Activated CD4-positive, alpha-beta T cell treated with anti-CD3 and anti-CD28 coated beads, Interleukin-2, amount 10 ng/mL, durations not matched to agents 7 days and 5 days (primary cell): ENCODE measurements at regions of chr17 and their contacts with region 1.

Region 1: DNA sequence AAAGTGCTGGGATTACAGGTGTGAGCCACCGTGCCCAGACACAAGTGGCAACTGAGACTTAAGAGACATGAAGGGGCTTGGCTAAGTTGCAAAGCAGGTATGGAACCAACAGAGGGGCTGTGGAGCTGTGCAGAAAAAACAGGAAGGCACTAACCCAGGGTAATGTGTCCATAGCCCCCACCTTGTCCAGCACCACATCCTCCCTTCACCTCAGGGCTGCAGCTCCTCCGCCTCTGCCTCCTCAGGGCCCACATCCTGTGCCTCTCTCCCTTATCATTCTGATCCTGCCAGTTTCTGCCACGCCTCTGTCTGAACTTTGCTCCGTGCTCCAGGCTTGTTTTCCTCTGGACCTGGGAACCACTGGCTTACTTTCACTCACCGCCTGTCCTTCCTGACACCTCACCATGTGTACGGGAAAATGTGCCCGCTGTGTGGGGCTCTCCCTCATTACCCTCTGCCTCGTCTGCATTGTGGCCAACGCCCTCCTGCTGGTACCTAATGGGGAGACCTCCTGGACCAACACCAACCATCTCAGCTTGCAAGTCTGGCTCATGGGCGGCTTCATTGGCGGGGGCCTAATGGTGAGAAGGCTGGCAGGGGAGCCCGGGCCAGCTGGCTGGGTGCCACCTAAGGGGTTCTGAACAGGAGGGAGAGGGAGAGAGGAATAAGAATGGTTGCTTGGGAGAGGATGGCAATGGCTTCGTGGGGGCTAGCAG is at the start of gene TM4SF5:
- DNase-seq: peak; percentile 56
- H3K4me3 Mint-ChIP-seq: no peak within 1 kb of the TSS
- H3K27ac Mint-ChIP-seq: peak within 1 kb of the TSS; percentile 78
- H3K4me1 Mint-ChIP-seq: peaks cover 18% of the 10 kb centered on the region
- H3K27me3 Mint-ChIP-seq: peaks cover 4% of the 10 kb centered on the region
- total RNA-seq, gene TM4SF5: not detected

Region 2: DNA sequence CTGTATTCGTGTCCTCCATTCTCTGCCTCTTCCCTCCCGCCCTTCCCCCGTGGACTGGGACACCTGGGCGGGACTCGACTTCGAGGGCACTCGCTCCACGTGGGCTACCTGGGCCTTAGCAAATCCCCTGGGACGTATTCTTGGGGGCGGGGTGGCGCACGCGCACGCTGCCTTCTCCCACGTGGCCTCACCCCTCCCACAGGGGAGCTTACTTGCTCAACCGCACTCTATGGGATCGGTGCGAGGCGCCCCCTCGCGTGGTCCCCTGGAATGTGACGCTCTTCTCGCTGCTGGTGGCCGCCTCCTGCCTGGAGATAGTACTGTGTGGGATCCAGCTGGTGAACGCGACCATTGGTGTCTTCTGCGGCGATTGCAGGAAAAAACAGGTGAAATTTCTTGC is 11.0 kb after region 1 on chr17:
- CTCF ChIA-PET with region 1: interaction called, 11 read pairs
- POLR2A ChIA-PET with region 1: no interaction called
- DNase-seq: peak; percentile 24
- H3K4me3 Mint-ChIP-seq: no peak overlapping the region
- H3K27ac Mint-ChIP-seq: no peak overlapping the region
- H3K4me1 Mint-ChIP-seq: peaks cover 25% of the 10 kb centered on the region
- H3K27me3 Mint-ChIP-seq: peaks cover 64% of the 10 kb centered on the region

Region 3: GRCh38 chr17:4986951-4987766 is 215.5 kb after region 1 on chr17 and contains the start of gene CAMTA2:
- CTCF ChIA-PET with region 1: no interaction called
- POLR2A ChIA-PET with region 1: no interaction called
- DNase-seq: peak; percentile 89
- H3K4me3 Mint-ChIP-seq: peak within 1 kb of the TSS; percentile 90
- H3K27ac Mint-ChIP-seq: peak within 1 kb of the TSS; percentile 95
- H3K4me1 Mint-ChIP-seq: peaks cover 45% of the 10 kb centered on the region
- H3K27me3 Mint-ChIP-seq: no peaks in the 10 kb centered on the region
- total RNA-seq, gene CAMTA2: 58.2 to 62.7 TPM